Gastrocnemius medialis (tissue), 4 donors: ENCODE measurements at regions of chr6 and their contacts with region 1.

Region 1: GRCh38 chr6:53701333-53702218 is 36.0 kb upstream of the KLHL31 start:
- DNase-seq: peak in 1 of 2 donors; percentile 35
- ATAC-seq: peak; percentile 35 to 47
- H3K4me3 ChIP-seq: no peak overlapping the region
- H3K27ac ChIP-seq: peak overlapping the region; percentile 66 to 90 (median 86)
- H3K4me1 ChIP-seq: peaks cover 41 to 45% of the 10 kb centered on the region in 2 donors
- H3K27me3 ChIP-seq: no peaks in the 10 kb centered on the region
- CTCF ChIP-seq: no peak
- POLR2A ChIP-seq: no peak

Region 2: GRCh38 chr6:53647462-53648094 is 54.0 kb before region 1 on chr6:
- in situ Hi-C with region 1: no loop called
- intact Hi-C with region 1: no loop called
- DNase-seq: no peak
- ATAC-seq: no peak
- H3K4me3 ChIP-seq: no peak overlapping the region
- H3K27ac ChIP-seq: peak overlapping the region in 3 of 4 donors; percentile 1 to 89 (median 62)
- H3K4me1 ChIP-seq: peaks cover 18 to 39% of the 10 kb centered on the region in 2 donors
- H3K27me3 ChIP-seq: no peaks in the 10 kb centered on the region
- CTCF ChIP-seq: no peak
- POLR2A ChIP-seq: no peak

Region 3: GRCh38 chr6:53664623-53665022 is 37.0 kb before region 1 on chr6:
- in situ Hi-C with region 1: no loop called
- intact Hi-C with region 1: loop called (anchors 2 kb)
- DNase-seq: peak; percentile 80 to 92
- ATAC-seq: peak; percentile 82 to 83
- H3K4me3 ChIP-seq: peak overlapping the region; percentile 46 to 69 (median 53)
- H3K27ac ChIP-seq: peak overlapping the region; percentile 89 to 96 (median 92)
- H3K4me1 ChIP-seq: peaks cover 45 to 52% of the 10 kb centered on the region in 2 donors
- H3K27me3 ChIP-seq: no peaks in the 10 kb centered on the region
- CTCF ChIP-seq: peak in 3 of 5 experiments; percentile 10 to 43 (median 16)
- POLR2A ChIP-seq: peak in 1 of 2 donors; percentile 44

Region 4: DNA sequence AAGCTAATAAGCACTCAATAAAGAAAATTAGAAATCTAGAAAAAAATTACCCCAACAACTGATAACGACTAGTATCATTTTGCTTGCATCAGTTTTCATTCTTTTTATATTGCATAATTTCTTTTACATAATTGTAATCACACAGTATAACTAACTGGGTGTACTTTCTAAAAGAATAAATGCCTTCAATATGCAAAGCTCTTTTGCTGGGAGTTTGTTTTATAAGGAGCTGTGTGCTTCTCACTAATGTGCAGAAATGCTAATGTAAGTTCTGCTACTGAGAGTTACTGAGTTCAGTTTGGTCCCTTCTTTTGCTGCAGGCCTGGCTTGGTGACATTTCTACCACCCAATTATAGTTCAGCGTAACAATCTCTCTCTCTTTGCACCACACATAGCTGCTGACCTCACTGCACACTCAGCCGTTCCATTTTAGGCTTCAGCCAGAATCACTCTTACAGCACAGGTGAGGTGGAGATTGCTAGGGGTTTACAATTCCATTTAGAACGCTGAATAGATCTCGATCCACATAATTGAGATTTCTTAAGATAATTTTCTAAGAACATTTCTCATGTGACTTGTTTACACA is 15.1 kb before region 1 on chr6:
- in situ Hi-C with region 1: no loop called
- intact Hi-C with region 1: loop called (anchors 2 kb)
- DNase-seq: peak in 1 of 2 donors; percentile 69
- ATAC-seq: peak; percentile 96 to 98
- H3K4me3 ChIP-seq: no peak overlapping the region
- H3K27ac ChIP-seq: peak overlapping the region; percentile 70 to 82 (median 78)
- H3K4me1 ChIP-seq: peaks cover 18 to 23% of the 10 kb centered on the region in 2 donors
- H3K27me3 ChIP-seq: no peaks in the 10 kb centered on the region
- CTCF ChIP-seq: no peak
- POLR2A ChIP-seq: no peak

Region 5: GRCh38 chr6:53771785-53772624 is 70.4 kb after region 1 on chr6:
- in situ Hi-C with region 1: no loop called
- intact Hi-C with region 1: no loop called
- DNase-seq: no peak
- ATAC-seq: no peak
- H3K4me3 ChIP-seq: no peak overlapping the region
- H3K27ac ChIP-seq: no peak overlapping the region
- H3K4me1 ChIP-seq: no peaks in the 10 kb centered on the region
- H3K27me3 ChIP-seq: no peaks in the 10 kb centered on the region
- CTCF ChIP-seq: no peak
- POLR2A ChIP-seq: no peak